ENCODE measurements at regions of chr2 and their contacts with region 1.

Region 1: GRCh38 chr2:26577434-26578112 is 63.6 kb downstream of the CIB4 start:
- DNase-seq: peak; percentile 46 to 90
- H3K4me3 ChIP-seq: no peak overlapping the region
- H3K27ac ChIP-seq: no peak overlapping the region
- H3K4me1 ChIP-seq: peaks cover 0 to 3% (median 1%) of the 10 kb centered on the region in 4 experiments; a peak in 2 of 7 replicates
- H3K27me3 ChIP-seq: peaks cover 0 to 2% (median under 1%) of the 10 kb centered on the region in 4 experiments; a peak in 3 of 7 replicates
- CTCF ChIP-seq: peak in 2 of 3 experiments; percentile 97 to 99; a peak in 3 of 4 replicates
- EP300 ChIP-seq: no peak
- POLR2A ChIP-seq: no peak
- RAD21 ChIP-seq: peak; percentile 96

Region 2: DNA sequence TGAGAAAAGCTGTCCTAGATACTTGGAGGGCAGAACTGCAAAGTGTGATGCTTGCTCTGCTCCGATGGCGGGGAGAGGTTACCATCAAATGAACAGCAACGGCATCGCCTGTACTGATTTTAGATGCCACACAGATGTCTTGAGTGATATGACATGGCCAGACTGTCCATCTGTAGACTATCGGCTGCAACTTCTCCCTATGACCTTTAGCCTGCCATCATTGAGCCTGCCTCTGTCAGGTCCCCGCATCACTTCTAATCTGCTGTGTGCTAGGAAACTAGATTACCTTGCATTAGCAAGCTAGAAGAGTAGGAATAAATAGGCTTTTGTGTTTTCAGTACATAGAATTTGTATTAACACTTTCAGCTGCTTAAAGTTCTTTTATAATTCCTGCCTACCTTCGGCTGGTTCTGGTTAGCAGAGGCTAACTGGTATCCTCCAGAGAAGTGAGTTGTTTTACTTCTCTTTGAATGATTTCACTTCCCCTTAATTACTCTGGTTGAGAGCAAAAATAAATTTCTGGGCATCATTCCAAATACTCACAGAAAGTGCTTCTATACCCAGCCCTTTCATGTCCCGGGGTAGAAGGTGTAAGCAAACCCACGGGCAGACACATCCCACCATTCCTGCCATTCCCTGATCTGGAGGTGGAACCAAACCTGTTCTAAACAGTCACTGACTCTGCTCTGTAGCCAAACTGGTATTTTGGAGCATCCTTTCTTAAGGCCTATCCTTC is 380.7 kb before region 1 on chr2:
- CTCF ChIA-PET with region 1: no interaction called
- POLR2A ChIA-PET with region 1: no interaction called
- DNase-seq: no peak
- H3K4me3 ChIP-seq: no peak overlapping the region
- H3K27ac ChIP-seq: no peak overlapping the region
- H3K4me1 ChIP-seq: no peaks in the 10 kb centered on the region
- H3K27me3 ChIP-seq: no peaks in the 10 kb centered on the region
- CTCF ChIP-seq: no peak
- EP300 ChIP-seq: no peak
- POLR2A ChIP-seq: no peak
- RAD21 ChIP-seq: no peak

Region 3: GRCh38 chr2:26503231-26503880 is 74.2 kb before region 1 on chr2:
- CTCF ChIA-PET with region 1: interaction called, 41 read pairs
- POLR2A ChIA-PET with region 1: no interaction called
- DNase-seq: peak; percentile 58 to 97
- H3K4me3 ChIP-seq: peak overlapping the region; percentile 30 to 65 (median 50)
- H3K27ac ChIP-seq: no peak overlapping the region
- H3K4me1 ChIP-seq: peaks cover 0 to 7% (median 6%) of the 10 kb centered on the region in 4 experiments; a peak in 4 of 7 replicates
- H3K27me3 ChIP-seq: peaks cover 0 to 18% (median 11%) of the 10 kb centered on the region in 4 experiments; a peak in 6 of 7 replicates
- CTCF ChIP-seq: peak; percentile 71 to 94 (median 85)
- EP300 ChIP-seq: no peak
- POLR2A ChIP-seq: peak in 1 of 2 experiments; percentile 58; a peak in 1 of 3 replicates
- RAD21 ChIP-seq: peak; percentile 60 to 64

Region 4: GRCh38 chr2:26521054-26521912 is 56.3 kb before region 1 on chr2:
- CTCF ChIA-PET with region 1: interaction called, 97 read pairs
- POLR2A ChIA-PET with region 1: no interaction called
- DNase-seq: peak; percentile 29 to 66
- H3K4me3 ChIP-seq: no peak overlapping the region
- H3K27ac ChIP-seq: no peak overlapping the region
- H3K4me1 ChIP-seq: no peaks in the 10 kb centered on the region
- H3K27me3 ChIP-seq: no peaks in the 10 kb centered on the region
- CTCF ChIP-seq: peak; percentile 78 to 81 (median 81)
- EP300 ChIP-seq: no peak
- POLR2A ChIP-seq: no peak
- RAD21 ChIP-seq: peak; percentile 70 to 78

Region 5: DNA sequence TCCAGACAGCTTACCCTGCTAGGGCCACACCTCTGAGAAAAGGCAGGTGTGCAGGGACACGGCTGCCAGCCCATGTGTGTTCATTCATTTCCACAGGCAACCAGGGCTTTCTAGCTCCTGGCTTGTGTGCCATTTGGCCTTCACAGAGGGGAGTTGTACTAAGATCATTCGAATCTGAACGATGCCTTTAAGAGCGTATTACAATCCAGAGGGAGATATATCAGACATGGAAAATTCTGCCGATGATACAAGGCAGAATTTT is 35.4 kb before region 1 on chr2:
- CTCF ChIA-PET with region 1: interaction called, 27 read pairs
- POLR2A ChIA-PET with region 1: no interaction called
- DNase-seq: no peak
- H3K4me3 ChIP-seq: no peak overlapping the region
- H3K27ac ChIP-seq: no peak overlapping the region
- H3K4me1 ChIP-seq: peaks cover 3 to 7% (median 5%) of the 10 kb centered on the region in 4 experiments
- H3K27me3 ChIP-seq: no peaks in the 10 kb centered on the region; a peak in 1 of 7 replicates
- CTCF ChIP-seq: no peak
- EP300 ChIP-seq: no peak
- POLR2A ChIP-seq: no peak
- RAD21 ChIP-seq: no peak

Region 6: DNA sequence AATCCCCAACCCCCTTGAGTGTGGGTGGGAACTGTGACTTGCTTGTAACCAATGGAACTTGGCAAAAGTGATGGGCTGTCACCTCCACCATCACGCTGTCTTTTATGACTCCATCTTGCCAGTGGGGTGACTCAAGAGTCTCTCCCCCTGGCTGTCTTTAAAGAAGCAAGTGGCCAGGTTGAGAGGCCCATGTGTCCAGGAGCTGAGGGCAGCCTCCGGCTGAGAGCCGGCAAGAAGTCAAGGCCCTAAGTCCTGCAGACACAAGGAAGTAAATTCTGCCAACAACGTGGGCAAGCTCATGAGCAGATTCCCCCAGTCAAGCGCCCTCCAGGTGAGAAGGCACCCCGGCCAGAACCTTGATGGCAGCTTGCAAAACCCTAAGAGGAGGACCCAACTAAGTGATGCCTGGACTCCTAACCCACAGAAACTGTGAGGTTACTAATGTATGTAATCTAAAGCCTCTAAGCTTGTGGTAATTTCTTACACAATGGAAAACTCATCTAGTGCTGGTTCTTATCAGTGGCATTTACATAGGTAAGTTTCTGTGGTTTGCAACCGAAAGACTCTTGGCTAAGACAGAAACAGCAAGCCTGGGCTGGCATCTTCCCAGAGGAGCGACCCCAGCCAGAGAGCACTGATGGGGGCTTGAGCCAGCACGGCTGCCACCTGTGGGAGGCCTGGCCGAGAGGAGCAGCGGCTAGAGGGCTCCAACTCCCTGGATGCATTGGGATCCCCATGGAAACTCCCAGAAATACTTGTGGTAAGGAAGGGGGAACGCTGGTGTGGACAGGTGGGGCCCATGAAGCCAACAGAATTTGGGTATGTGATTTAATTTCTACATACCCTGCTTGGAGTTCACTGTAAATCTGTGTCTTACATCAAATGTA is 14.3 kb after region 1 on chr2:
- CTCF ChIA-PET with region 1: interaction called, 20 read pairs
- POLR2A ChIA-PET with region 1: no interaction called
- DNase-seq: peak in 1 of 2 experiments; percentile 44
- H3K4me3 ChIP-seq: no peak overlapping the region
- H3K27ac ChIP-seq: no peak overlapping the region
- H3K4me1 ChIP-seq: peaks cover 0 to 4% (median 1%) of the 10 kb centered on the region in 4 experiments; a peak in 3 of 7 replicates
- H3K27me3 ChIP-seq: peaks cover 0 to 3% (median 0%) of the 10 kb centered on the region in 4 experiments; a peak in 1 of 7 replicates
- CTCF ChIP-seq: no peak
- EP300 ChIP-seq: no peak
- POLR2A ChIP-seq: no peak
- RAD21 ChIP-seq: no peak

Region 7: DNA sequence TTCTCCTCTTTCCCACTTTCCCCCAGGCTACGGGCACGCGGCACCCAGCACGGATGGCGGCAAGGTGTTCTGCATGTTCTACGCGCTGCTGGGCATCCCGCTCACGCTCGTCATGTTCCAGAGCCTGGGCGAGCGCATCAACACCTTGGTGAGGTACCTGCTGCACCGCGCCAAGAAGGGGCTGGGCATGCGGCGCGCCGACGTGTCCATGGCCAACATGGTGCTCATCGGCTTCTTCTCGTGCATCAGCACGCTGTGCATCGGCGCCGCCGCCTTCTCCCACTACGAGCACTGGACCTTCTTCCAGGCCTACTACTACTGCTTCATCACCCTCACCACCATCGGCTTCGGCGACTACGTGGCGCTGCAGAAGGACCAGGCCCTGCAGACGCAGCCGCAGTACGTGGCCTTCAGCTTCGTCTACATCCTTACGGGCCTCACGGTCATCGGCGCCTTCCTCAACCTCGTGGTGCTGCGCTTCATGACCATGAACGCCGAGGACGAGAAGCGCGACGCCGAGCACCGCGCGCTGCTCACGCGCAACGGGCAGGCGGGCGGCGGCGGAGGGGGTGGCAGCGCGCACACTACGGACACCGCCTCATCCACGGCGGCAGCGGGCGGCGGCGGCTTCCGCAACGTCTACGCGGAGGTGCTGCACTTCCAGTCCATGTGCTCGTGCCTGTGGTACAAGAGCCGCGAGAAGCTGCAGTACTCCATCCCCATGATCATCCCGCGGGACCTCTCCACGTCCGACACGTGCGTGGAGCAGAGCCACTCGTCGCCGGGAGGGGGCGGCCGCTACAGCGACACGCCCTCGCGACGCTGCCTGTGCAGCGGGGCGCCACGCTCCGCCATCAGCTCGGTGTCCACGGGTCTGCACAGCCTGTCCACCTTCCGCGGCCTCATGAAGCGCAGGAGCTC is 150.3 kb after region 1 on chr2:
- CTCF ChIA-PET with region 1: interaction called, 10 read pairs
- POLR2A ChIA-PET with region 1: interaction called, 3 read pairs
- DNase-seq: no peak
- H3K4me3 ChIP-seq: no peak overlapping the region
- H3K27ac ChIP-seq: no peak overlapping the region
- H3K4me1 ChIP-seq: no peaks in the 10 kb centered on the region
- H3K27me3 ChIP-seq: no peaks in the 10 kb centered on the region; a peak in 1 of 7 replicates
- CTCF ChIP-seq: peak in 1 of 3 experiments; percentile 24; a peak in 1 of 4 replicates
- EP300 ChIP-seq: no peak
- POLR2A ChIP-seq: no peak
- RAD21 ChIP-seq: no peak

Measured in H1 (cell line).